HEK293 (cell line): ENCODE measurements at regions of chr6 and their contacts with region 1.

Region 1: DNA sequence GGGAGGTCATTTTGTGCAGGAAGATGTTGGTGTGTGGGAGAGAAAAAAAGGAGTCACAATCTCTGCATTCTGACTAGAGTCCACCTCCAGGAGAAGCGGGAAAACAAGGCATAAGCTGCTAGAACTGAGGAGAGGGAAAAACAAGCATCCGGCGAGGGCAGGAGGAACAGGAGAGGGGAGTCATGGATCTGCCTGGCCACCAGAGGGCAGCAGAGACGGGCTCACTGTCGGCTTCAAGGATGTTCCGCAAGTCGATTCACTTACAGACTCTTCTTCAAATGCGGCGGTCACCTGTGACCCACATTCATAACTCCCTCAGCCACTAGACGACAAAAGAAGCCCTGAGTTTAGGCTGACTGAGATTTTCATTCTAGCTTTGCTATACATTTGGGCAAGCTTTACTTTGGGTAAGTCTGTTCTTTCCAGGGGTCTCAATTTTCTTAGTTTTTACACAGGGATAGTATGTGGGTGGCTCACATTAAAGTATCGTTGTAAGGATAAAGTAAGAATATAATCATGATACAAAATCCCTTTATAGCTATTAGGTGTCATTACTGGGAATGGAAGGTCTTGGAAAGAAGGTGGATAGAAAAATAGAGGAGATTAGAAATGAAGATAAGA is 6.6 kb upstream of the BTNL2 start:
- H3K4me3 ChIP-seq: no peak overlapping the region
- H3K27ac ChIP-seq: no peak overlapping the region
- H3K4me1 ChIP-seq: no peaks in the 10 kb centered on the region
- CTCF ChIP-seq: peak; percentile 91

Region 2: GRCh38 chr6:31945507-31946369 is 467.8 kb before region 1 on chr6 and contains the start of gene CFB:
- CTCF ChIA-PET with region 1: no interaction called
- POLR2A ChIA-PET with region 1: no interaction called
- H3K4me3 ChIP-seq: no peak within 1 kb of the TSS
- H3K27ac ChIP-seq: no peak within 1 kb of the TSS
- H3K4me1 ChIP-seq: peaks cover 1% of the 10 kb centered on the region; the same call in 1 of the 2 replicates
- CTCF ChIP-seq: no peak

Region 3: DNA sequence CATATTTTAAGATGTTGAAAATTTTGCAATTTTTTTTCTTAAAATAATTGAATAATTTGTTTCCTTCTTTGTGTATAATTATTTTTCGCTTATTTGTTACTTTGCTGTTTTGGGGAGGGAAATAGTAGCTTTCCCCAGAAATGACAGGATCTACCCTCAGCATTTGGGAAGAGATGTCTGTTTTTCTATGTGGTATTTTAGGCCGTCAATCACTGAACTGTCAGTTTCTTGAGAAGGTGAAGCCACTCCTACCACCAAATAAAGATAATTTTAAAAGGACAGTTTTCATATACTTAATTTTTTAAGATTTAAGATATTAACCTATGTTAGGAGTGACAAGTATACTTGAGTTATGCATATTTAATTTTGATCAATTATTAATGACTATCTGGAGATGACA is 73.3 kb before region 1 on chr6:
- CTCF ChIA-PET with region 1: no interaction called
- POLR2A ChIA-PET with region 1: no interaction called
- H3K4me3 ChIP-seq: no peak overlapping the region
- H3K27ac ChIP-seq: no peak overlapping the region
- H3K4me1 ChIP-seq: no peaks in the 10 kb centered on the region
- CTCF ChIP-seq: no peak

Region 4: DNA sequence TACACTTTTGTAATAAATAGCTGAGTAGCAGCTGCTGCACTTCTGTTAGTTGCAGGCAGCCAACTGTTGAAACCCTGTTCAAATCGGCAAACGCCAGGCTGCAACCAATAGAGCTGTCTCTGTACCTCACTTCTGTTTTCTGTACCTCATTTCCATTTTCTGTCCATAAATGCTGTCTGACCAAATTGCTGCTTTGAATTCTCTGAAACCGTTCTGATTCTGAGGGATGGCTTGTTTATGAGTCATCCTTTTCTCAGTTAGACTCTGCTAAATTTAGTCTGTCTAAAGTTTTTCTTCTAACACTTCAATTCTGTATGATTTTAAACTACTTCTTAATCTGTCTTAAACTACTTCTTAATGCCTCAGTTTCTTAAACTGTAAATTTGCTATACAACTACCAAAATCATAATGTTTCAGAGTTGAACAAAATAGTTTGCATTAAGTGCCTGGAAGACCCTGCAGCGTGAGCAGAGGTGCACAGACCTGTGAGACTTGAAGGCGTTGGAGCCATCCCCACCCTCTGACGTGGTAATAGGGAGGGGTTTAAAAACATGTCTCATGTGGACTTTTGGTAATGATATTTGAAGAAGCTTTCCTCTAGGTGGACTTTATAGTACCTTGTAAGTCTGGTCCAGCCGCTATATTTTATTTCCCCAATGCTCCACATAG is 16.2 kb before region 1 on chr6:
- CTCF ChIA-PET with region 1: interaction called, 28 read pairs
- POLR2A ChIA-PET with region 1: no interaction called
- H3K4me3 ChIP-seq: no peak overlapping the region
- H3K27ac ChIP-seq: no peak overlapping the region
- H3K4me1 ChIP-seq: no peaks in the 10 kb centered on the region
- CTCF ChIP-seq: no peak

Region 5: DNA sequence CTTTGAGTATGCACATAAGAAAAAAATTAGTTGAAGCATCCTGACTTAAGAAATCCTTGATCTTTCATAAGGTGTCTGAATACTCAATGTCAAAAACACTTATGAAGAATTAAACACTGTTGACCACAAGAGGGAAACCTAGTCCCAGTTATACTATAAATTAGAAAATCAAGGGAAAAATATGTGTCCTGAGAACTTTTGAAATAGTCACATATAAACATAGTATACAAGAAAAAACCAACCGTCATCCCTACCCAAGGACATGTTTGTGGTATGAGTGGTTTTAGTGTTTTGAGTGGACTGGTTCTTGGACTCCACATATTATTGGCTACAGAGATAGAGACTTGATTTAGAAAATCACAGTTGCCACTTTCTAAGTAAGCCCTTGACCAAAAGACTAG is 18.5 kb after region 1 on chr6:
- CTCF ChIA-PET with region 1: interaction called, 48 read pairs
- POLR2A ChIA-PET with region 1: no interaction called
- H3K4me3 ChIP-seq: no peak overlapping the region
- H3K27ac ChIP-seq: no peak overlapping the region
- H3K4me1 ChIP-seq: no peaks in the 10 kb centered on the region
- CTCF ChIP-seq: no peak

Region 6: DNA sequence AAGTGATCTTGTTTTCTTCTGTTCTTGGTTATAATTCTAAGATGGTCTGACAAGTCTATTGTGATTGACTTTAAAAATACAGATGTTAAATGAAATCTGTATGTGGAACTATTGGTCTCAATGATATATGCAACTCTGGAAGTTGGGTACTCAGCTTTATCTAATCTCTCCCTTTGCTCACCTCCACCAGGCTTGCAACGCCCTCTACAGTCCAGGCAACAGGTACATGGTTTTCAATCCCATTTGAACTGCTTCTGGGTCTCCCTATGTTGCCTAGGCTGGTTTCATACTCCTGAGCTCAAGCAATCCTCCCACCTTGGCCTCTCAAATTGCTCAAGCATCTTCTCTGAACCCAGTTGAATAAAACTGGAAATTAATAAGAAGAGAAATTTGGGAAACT is 278.5 kb after region 1 on chr6:
- CTCF ChIA-PET with region 1: interaction called, 34 read pairs
- POLR2A ChIA-PET with region 1: no interaction called
- H3K4me3 ChIP-seq: no peak overlapping the region
- H3K27ac ChIP-seq: no peak overlapping the region
- H3K4me1 ChIP-seq: no peaks in the 10 kb centered on the region
- CTCF ChIP-seq: 0 out of 2 replicates have a peak, but pooled peaks have one; percentile 22

Region 7: GRCh38 chr6:32796848-32797776 is 383.6 kb after region 1 on chr6:
- CTCF ChIA-PET with region 1: interaction called, 24 read pairs
- POLR2A ChIA-PET with region 1: no interaction called
- H3K4me3 ChIP-seq: peak overlapping the region; percentile 19
- H3K27ac ChIP-seq: no peak overlapping the region
- H3K4me1 ChIP-seq: no peaks in the 10 kb centered on the region
- CTCF ChIP-seq: peak; percentile 72